ENCODE measurements at regions of chr14 and their contacts with region 1.

Region 1: DNA sequence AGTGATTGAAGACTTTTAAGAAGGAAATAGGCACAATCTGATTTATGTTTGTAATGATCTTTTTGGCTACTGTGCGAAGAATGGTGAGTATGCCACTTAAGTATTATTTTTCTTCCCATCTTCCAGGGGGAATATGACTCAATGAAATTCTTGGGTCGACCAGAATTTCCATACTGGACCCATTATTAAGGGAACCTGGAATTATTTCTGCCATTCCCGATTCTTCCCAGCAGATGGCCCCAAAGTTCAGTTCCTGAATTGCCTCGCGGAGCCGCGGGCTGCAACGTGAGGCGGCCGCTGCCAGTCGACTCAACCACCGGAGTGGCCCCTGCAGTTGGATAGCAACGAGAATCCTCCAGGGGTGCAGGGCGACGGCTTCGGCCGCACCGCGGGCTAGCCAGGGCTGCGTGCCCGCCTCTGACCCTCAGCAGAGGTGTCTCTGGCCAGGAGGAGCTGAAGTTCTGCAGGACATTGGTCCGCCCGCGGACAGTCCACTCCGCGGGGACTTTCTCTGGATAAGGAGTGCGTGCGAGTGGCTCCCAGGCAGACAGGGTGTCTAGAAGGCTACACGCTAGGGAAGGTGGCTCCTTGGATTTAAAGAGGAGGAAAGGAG is 628 bp upstream of the TSHR start:
- DNase-seq: peak; percentile 48 to 71 (median 66)
- ATAC-seq: peak; percentile 84
- H3K4me3 ChIP-seq: peak overlapping the region; percentile 87
- H3K4me3 Mint-ChIP-seq: peak overlapping the region; percentile 80 to 93 (median 88)
- H3K27ac ChIP-seq: no peak overlapping the region
- H3K27ac Mint-ChIP-seq: peak overlapping the region in 4 of 9 donors; percentile 51 to 86 (median 67)
- H3K4me1 ChIP-seq: peaks cover 12 to 18% of the 10 kb centered on the region in 2 donors
- H3K4me1 Mint-ChIP-seq: peaks cover 12 to 51% (median 37%) of the 10 kb centered on the region in 7 donors
- H3K27me3 ChIP-seq: no peaks in the 10 kb centered on the region
- H3K27me3 Mint-ChIP-seq: peaks cover 0 to 61% (median 4%) of the 10 kb centered on the region in 5 donors

Region 2: GRCh38 chr14:80930836-80931389 is 23.9 kb before region 1 on chr14:
- CTCF ChIA-PET with region 1: no interaction called
- POLR2A ChIA-PET with region 1: no interaction called
- intact Hi-C with region 1: loop called in 1 of 2 experiments (anchors 1 kb)
- DNase-seq: peak in 7 of 9 donors; percentile 25 to 73 (median 57)
- ATAC-seq: peak; percentile 87
- H3K4me3 ChIP-seq: no peak overlapping the region
- H3K4me3 Mint-ChIP-seq: peak overlapping the region in 9 of 10 donors; percentile 2 to 84 (median 43)
- H3K27ac ChIP-seq: no peak overlapping the region
- H3K27ac Mint-ChIP-seq: peak overlapping the region in 8 of 9 donors; percentile 26 to 93 (median 60)
- H3K4me1 ChIP-seq: peaks cover 6 to 25% of the 10 kb centered on the region in 2 donors
- H3K4me1 Mint-ChIP-seq: peaks cover 10 to 63% (median 18%) of the 10 kb centered on the region in 7 donors
- H3K27me3 ChIP-seq: no peaks in the 10 kb centered on the region
- H3K27me3 Mint-ChIP-seq: peaks cover 0 to 6% (median 0%) of the 10 kb centered on the region in 5 donors

Region 3: DNA sequence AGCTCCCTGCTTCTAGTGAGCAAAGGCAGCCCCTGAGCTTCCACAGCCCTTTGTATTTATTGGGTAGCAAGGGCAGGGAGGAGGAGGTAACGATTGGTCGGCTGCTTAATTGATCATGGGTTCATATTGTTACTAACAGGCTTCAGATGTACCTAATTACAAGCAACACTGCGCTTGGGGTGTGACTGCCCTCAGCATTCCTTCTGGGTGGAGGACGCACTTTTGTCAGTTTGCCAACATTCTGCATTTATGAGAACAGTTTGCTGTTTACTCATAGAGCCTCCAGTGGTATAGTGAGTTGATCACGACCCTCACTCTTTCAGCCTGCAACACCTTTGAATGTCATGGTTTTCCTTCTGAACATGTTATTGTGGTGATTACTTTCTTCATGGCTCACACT is 10.2 kb after region 1 on chr14:
- CTCF ChIA-PET with region 1: interaction called, 4 read pairs
- POLR2A ChIA-PET with region 1: no interaction called
- intact Hi-C with region 1: loop called in 1 of 2 experiments (anchors 1 kb)
- DNase-seq: no peak
- ATAC-seq: no peak
- H3K4me3 ChIP-seq: no peak overlapping the region
- H3K4me3 Mint-ChIP-seq: no peak overlapping the region
- H3K27ac ChIP-seq: no peak overlapping the region
- H3K27ac Mint-ChIP-seq: no peak overlapping the region
- H3K4me1 ChIP-seq: peaks cover 0 to under 1% of the 10 kb centered on the region in 2 donors
- H3K4me1 Mint-ChIP-seq: peaks cover under 1 to 12% (median 4%) of the 10 kb centered on the region in 7 donors
- H3K27me3 ChIP-seq: no peaks in the 10 kb centered on the region
- H3K27me3 Mint-ChIP-seq: peaks cover 0 to 42% (median 4%) of the 10 kb centered on the region in 5 donors

Region 4: DNA sequence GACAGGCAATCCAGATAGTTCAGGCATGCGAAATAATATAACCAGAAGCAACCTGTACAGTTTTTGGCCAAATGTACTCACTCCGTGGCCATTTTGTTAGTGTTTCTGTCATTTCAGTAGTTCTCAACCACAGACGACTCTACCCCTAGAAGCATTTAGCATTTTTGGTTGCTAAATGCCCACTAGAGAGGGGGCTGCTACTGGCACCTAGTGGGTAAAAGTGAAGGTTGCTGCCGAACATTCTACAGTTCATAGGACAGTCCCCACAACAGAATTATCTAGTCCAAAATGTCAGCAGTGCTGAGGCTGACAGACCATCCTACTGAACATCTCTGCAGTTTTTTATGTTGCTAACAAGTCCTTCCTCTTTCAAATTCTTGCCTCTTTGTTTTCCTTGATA is 108.0 kb after region 1 on chr14:
- CTCF ChIA-PET with region 1: no interaction called
- POLR2A ChIA-PET with region 1: no interaction called
- intact Hi-C with region 1: loop called (anchors 2 kb)
- DNase-seq: peak in 3 of 9 donors; percentile 1 to 14 (median 2)
- ATAC-seq: peak; percentile 51
- H3K4me3 ChIP-seq: no peak overlapping the region
- H3K4me3 Mint-ChIP-seq: no peak overlapping the region
- H3K27ac ChIP-seq: no peak overlapping the region
- H3K27ac Mint-ChIP-seq: no peak overlapping the region
- H3K4me1 ChIP-seq: no peaks in the 10 kb centered on the region
- H3K4me1 Mint-ChIP-seq: no peaks in the 10 kb centered on the region
- H3K27me3 ChIP-seq: no peaks in the 10 kb centered on the region
- H3K27me3 Mint-ChIP-seq: peaks cover 2 to 15% (median 8%) of the 10 kb centered on the region in 5 donors

Region 5: DNA sequence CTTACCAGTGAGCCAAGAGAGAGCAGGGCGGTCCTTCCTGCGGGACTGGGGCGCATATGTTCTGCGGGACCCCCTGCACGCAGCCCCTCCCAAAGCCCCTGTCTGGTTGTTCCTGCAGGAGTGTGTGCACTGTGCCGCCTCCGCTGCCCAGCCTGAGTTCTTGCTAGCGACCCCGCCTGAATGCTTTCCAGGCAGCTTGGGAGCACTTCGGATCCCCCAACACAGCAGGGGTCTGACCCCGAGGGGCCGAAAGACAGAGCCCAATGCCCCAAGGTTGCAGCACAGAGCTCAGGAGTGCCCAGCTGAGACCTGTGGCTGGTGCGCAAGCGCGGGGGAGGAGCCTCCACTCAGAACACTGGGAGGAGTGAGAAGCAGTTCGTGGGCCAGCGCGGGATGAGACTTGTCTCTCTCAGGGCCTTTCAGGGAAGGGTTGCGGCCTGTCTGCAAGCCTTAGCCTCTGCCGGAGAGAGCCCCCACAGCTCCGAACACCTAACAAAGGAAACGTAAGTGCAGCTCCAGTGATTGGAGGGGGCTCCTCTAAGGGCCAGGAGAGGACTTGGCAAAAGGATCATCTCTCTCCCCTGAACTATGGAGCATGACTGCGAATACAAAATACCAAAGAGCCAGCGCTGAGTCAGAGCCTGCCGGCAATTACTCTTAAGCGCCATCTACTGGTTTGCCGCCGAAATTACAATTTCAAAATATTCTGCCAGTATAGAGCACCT is 215.5 kb after region 1 on chr14:
- CTCF ChIA-PET with region 1: interaction called, 3 read pairs
- POLR2A ChIA-PET with region 1: interaction called, 3 read pairs
- intact Hi-C with region 1: loop called (anchors 1 kb)
- DNase-seq: peak; percentile 76 to 91 (median 89)
- ATAC-seq: peak; percentile 98
- H3K4me3 ChIP-seq: peak overlapping the region; percentile 79
- H3K4me3 Mint-ChIP-seq: peak overlapping the region; percentile 87 to 98 (median 93)
- H3K27ac ChIP-seq: peak overlapping the region; percentile 54
- H3K27ac Mint-ChIP-seq: peak overlapping the region; percentile 71 to 96 (median 92)
- H3K4me1 ChIP-seq: peaks cover 8 to 17% of the 10 kb centered on the region in 2 donors
- H3K4me1 Mint-ChIP-seq: peaks cover 11 to 46% (median 24%) of the 10 kb centered on the region in 7 donors
- H3K27me3 ChIP-seq: no peaks in the 10 kb centered on the region
- H3K27me3 Mint-ChIP-seq: no peaks in the 10 kb centered on the region

Region 6: GRCh38 chr14:81220830-81221578 is 266.2 kb after region 1 on chr14 and contains the start of gene GTF2A1:
- CTCF ChIA-PET with region 1: no interaction called
- POLR2A ChIA-PET with region 1: interaction called, 4 read pairs
- intact Hi-C with region 1: loop called (anchors 1 kb)
- DNase-seq: peak; percentile 92 to 96 (median 94)
- ATAC-seq: peak; percentile 84
- H3K4me3 ChIP-seq: peak within 1 kb of the TSS; percentile 94
- H3K4me3 Mint-ChIP-seq: peak within 1 kb of the TSS; percentile 92 to 100 (median 99)
- H3K27ac ChIP-seq: peak within 1 kb of the TSS; percentile 97
- H3K27ac Mint-ChIP-seq: peak within 1 kb of the TSS; percentile 98 to 100 (median 100)
- H3K4me1 ChIP-seq: peaks cover 22 to 28% of the 10 kb centered on the region in 2 donors
- H3K4me1 Mint-ChIP-seq: peaks cover 16 to 47% (median 33%) of the 10 kb centered on the region in 7 donors
- H3K27me3 ChIP-seq: no peaks in the 10 kb centered on the region
- H3K27me3 Mint-ChIP-seq: peaks cover 0 to 11% (median 0%) of the 10 kb centered on the region in 5 donors
- total RNA-seq, gene GTF2A1: 21.5 to 39.2 (median 33.7) TPM

Region 7: DNA sequence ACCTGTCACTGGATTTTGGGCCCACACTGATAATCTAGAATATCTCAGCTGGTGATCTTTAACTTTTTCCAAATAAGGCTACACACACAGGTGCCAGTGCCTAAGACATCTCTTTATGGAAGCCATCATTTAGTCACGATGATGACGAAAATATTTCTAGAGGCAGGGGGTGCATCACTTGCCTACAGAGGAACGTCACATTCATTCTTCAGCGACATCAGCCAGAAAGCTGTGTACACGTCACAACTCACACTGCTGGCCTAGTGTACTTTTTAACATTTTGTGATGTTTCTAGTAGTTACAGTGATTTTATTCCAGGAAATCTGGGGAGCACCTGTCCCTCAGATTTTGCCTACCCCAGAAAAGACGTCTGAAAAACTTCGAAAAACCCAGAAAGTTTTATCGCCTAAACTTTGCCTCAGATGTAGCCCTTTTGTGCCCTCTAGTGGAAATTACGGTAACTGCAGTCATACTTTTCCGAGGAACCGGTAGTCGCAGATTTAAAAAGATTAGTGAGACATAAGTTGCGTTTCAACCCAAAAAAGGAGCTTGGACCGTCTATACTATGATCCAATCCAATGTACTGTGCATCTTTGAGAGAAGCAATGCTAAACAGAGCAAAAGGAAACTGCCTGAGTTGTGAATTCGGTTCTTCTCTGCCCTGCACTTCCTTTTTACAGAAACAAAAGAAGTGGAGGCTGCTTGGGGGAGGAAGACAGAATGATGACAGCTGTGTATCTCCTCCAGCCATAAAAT is 509.6 kb after region 1 on chr14:
- CTCF ChIA-PET with region 1: no interaction called
- POLR2A ChIA-PET with region 1: interaction called, 4 read pairs
- intact Hi-C with region 1: loop called (anchors 1 to 2 kb)
- DNase-seq: peak; percentile 15 to 86 (median 75)
- ATAC-seq: peak; percentile 90
- H3K4me3 ChIP-seq: peak overlapping the region; percentile 85
- H3K4me3 Mint-ChIP-seq: peak overlapping the region; percentile 76 to 91 (median 88)
- H3K27ac ChIP-seq: peak overlapping the region; percentile 76
- H3K27ac Mint-ChIP-seq: peak overlapping the region; percentile 70 to 98 (median 91)
- H3K4me1 ChIP-seq: no peaks in the 10 kb centered on the region
- H3K4me1 Mint-ChIP-seq: peaks cover 0 to 14% (median 8%) of the 10 kb centered on the region in 7 donors
- H3K27me3 ChIP-seq: no peaks in the 10 kb centered on the region
- H3K27me3 Mint-ChIP-seq: no peaks in the 10 kb centered on the region